ENCODE measurements at regions of chr5 and their contacts with region 1.

Region 1: GRCh38 chr5:163459922-163460766 is at the starts of genes HMMR and NUDCD2:
- DNase-seq: peak; percentile 94 to 99 (median 98)
- ATAC-seq: peak; percentile 89
- H3K4me3 ChIP-seq: peak within 1 kb of the TSS; percentile 91
- H3K4me3 Mint-ChIP-seq: peak within 1 kb of the TSS; percentile 90 to 99 (median 97)
- H3K27ac ChIP-seq: peak within 1 kb of the TSS; percentile 98
- H3K27ac Mint-ChIP-seq: peak within 1 kb of the TSS; percentile 99 to 100 (median 99)
- H3K4me1 ChIP-seq: peaks cover 8 to 23% of the 10 kb centered on the region in 2 donors
- H3K4me1 Mint-ChIP-seq: peaks cover 18 to 62% (median 52%) of the 10 kb centered on the region in 7 donors
- H3K27me3 ChIP-seq: no peaks in the 10 kb centered on the region
- H3K27me3 Mint-ChIP-seq: no peaks in the 10 kb centered on the region
- total RNA-seq, gene HMMR: 0.37 to 34.0 (median 0.55) TPM in 4 of 5 experiments, not detected in the other
- total RNA-seq, gene NUDCD2: 17.9 to 34.0 (median 27.1) TPM

Region 2: DNA sequence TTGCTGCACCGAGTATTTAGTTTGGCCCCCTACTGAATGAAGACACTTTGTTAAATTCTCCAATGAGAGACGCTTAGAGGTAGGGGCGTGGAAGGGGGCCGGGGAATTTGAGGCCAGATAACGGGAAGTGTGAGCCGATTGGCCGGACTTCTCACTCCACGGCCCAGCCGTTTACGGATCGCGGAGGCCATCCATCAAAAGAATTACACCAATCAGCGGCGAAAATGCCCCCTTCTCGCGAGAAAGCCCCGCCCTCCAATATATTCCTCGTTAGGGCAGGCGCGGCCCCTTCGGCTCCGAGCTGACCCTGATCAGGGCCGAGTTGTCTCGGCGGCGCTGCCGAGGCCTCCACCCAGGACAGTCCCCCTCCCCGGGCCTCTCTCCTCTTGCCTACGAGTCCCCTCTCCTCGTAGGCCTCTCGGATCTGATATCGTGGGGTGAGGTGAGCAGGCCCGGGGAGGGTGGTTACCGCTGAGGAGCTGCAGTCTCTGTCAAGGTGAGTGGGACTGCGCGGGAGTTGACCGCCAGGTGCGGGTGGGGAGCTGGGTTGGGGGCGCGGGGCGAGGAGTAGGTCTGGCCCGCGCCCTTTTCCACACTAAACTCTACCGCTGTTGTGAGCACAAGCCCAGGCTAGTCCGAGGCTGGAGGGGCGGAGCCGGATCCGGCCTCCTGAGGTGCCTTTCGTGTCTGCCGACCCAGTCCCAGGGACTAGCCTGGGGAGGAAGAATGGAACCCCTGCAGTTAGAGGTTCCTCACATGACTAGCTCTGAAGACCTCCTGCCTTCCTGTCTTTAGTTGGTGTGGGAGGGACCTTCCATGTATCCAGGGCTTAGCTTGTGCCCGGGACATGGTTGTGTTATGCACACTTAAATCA is 22.6 kb before region 1 on chr5 and contains the start of gene CCNG1:
- CTCF ChIA-PET with region 1: interaction called, 7 read pairs
- POLR2A ChIA-PET with region 1: interaction called, 108 read pairs
- intact Hi-C with region 1: loop called (anchors 1 kb)
- DNase-seq: peak; percentile 68 to 87 (median 84)
- ATAC-seq: peak; percentile 98
- H3K4me3 ChIP-seq: peak within 1 kb of the TSS; percentile 84
- H3K4me3 Mint-ChIP-seq: peak within 1 kb of the TSS; percentile 86 to 97 (median 95)
- H3K27ac ChIP-seq: peak within 1 kb of the TSS; percentile 96
- H3K27ac Mint-ChIP-seq: peak within 1 kb of the TSS; percentile 79 to 99 (median 93)
- H3K4me1 ChIP-seq: peaks cover 24 to 28% of the 10 kb centered on the region in 2 donors
- H3K4me1 Mint-ChIP-seq: peaks cover 20 to 55% (median 51%) of the 10 kb centered on the region in 7 donors
- H3K27me3 ChIP-seq: peaks cover 0 to 5% of the 10 kb centered on the region in 2 donors
- H3K27me3 Mint-ChIP-seq: peaks cover 0 to 13% (median 4%) of the 10 kb centered on the region in 5 donors
- total RNA-seq, gene CCNG1: 86.0 to 150 (median 116) TPM

Region 3: GRCh38 chr5:163473635-163474243 is 13.6 kb after region 1 on chr5:
- CTCF ChIA-PET with region 1: interaction called, 10 read pairs
- POLR2A ChIA-PET with region 1: interaction called, 18 read pairs
- intact Hi-C with region 1: loop called in 1 of 2 experiments (anchors 1 kb)
- DNase-seq: peak in 4 of 9 donors; percentile 12 to 48 (median 36)
- ATAC-seq: peak; percentile 84
- H3K4me3 ChIP-seq: no peak overlapping the region
- H3K4me3 Mint-ChIP-seq: no peak overlapping the region
- H3K27ac ChIP-seq: no peak overlapping the region
- H3K27ac Mint-ChIP-seq: no peak overlapping the region
- H3K4me1 ChIP-seq: no peaks in the 10 kb centered on the region
- H3K4me1 Mint-ChIP-seq: peaks cover 0 to 13% (median 0%) of the 10 kb centered on the region in 7 donors
- H3K27me3 ChIP-seq: no peaks in the 10 kb centered on the region
- H3K27me3 Mint-ChIP-seq: no peaks in the 10 kb centered on the region

Measured in naive thymus-derived CD4-positive, alpha-beta T cell (primary cell).